Transverse colon (tissue), 4 donors: ENCODE measurements at regions of chr1 and their contacts with region 1.

Region 1: DNA sequence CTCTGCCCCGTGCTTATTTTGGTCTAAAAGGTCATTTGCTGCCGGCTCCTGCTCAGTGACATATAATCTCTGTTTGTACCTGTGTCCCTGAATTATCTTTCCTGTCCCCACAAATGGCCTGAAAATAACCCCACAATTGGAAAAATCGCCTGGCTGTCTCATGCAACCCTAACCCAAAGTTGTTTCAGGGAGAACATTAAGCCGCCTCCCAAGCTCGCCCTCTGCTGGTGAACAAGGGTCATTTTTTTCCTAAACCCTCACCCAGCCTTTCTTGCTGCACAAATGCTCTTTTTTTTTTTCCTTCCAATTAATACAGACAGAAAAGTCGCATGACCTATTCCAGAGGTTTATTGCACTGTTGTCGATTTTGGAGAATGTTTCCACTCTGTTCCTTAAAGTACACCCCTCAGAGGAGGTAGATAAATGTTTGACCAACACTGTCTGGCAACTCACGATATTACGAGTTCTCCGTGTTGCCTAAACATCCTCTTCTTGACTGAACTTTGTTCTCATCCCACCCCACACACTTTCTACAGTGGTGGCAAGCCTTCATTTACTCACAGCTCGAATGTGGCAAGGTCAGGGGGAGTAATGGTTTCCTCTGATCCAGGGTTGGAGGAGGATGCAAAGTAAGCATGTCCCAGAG is 148.7 kb downstream of the ZZZ3 start:
- DNase-seq: peak; percentile 51
- H3K4me3 ChIP-seq: no peak overlapping the region
- H3K27ac ChIP-seq: no peak overlapping the region
- H3K4me1 ChIP-seq: peaks cover 0 to 4% (median 0%) of the 10 kb centered on the region in 4 donors
- H3K27me3 ChIP-seq: no peaks in the 10 kb centered on the region
- CTCF ChIP-seq: peak; percentile 73 to 85 (median 81)
- EP300 ChIP-seq: no peak
- POLR2A ChIP-seq: no peak

Region 2: DNA sequence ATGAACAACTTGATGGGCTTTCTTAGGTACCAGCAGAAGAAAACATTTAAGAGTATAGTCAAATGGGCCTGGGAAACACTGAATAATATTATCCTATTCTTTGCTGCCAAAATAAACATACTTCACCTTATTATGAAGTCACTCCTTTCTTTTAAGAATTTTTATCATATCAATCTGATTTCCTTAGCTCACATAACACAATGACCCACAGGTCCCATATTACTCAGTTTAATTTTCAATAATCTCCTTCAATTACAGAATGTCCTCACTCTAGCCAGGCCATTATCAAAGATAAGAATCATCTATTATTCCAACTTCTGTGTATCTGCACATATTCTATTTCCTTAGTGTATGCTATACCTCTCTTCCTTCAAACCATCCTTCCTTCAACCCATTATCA is 377.6 kb before region 1 on chr1:
- in situ Hi-C with region 1: loop called in 2 of 4 experiments (anchors 10 to 25 kb)
- intact Hi-C with region 1: no loop called
- DNase-seq: no peak
- H3K4me3 ChIP-seq: no peak overlapping the region
- H3K27ac ChIP-seq: no peak overlapping the region
- H3K4me1 ChIP-seq: no peaks in the 10 kb centered on the region
- H3K27me3 ChIP-seq: no peaks in the 10 kb centered on the region
- CTCF ChIP-seq: no peak
- EP300 ChIP-seq: no peak
- POLR2A ChIP-seq: no peak

Region 3: DNA sequence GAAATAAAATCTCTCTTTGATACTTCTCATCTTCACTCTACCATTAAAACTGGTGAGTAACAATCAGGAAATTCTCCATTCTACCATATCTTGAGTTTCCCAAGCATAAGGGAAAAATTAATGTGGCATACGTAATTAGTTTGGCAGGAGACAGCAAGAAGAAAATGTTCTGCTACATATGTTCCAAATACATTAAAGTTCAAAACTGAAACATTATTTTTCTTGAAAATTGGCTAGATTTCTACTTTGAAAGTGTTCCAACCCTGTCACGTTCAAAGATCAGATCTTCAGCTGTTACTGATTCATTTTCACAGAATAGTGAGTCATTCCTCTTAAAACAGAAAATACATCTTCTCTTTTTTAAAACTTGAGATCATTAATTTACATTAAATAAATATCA is 363.1 kb before region 1 on chr1:
- in situ Hi-C with region 1: loop called in 1 of 4 experiments (anchors 25 kb)
- intact Hi-C with region 1: no loop called
- DNase-seq: no peak
- H3K4me3 ChIP-seq: no peak overlapping the region
- H3K27ac ChIP-seq: no peak overlapping the region
- H3K4me1 ChIP-seq: no peaks in the 10 kb centered on the region
- H3K27me3 ChIP-seq: no peaks in the 10 kb centered on the region
- CTCF ChIP-seq: no peak
- EP300 ChIP-seq: no peak
- POLR2A ChIP-seq: no peak